CD8-positive, alpha-beta T cell (primary cell): ENCODE measurements at regions of chr9 and their contacts with region 1.

Region 1: GRCh38 chr9:85741875-85742629 is at the start of gene AGTPBP1:
- DNase-seq: peak; percentile 90 to 99 (median 97)
- ATAC-seq: peak; percentile 85
- H3K4me3 ChIP-seq: peak within 1 kb of the TSS; percentile 78 to 89
- H3K4me3 Mint-ChIP-seq: peak within 1 kb of the TSS; percentile 96
- H3K27ac ChIP-seq: peak within 1 kb of the TSS; percentile 83 to 93
- H3K27ac Mint-ChIP-seq: peak within 1 kb of the TSS; percentile 98
- H3K4me1 ChIP-seq: peaks cover 12% of the 10 kb centered on the region
- H3K4me1 Mint-ChIP-seq: peaks cover 40% of the 10 kb centered on the region
- H3K27me3 ChIP-seq: no peaks in the 10 kb centered on the region
- H3K27me3 Mint-ChIP-seq: no peaks in the 10 kb centered on the region
- CTCF ChIP-seq: no peak
- total RNA-seq, gene AGTPBP1: 58.3 to 58.4 TPM

Region 2: DNA sequence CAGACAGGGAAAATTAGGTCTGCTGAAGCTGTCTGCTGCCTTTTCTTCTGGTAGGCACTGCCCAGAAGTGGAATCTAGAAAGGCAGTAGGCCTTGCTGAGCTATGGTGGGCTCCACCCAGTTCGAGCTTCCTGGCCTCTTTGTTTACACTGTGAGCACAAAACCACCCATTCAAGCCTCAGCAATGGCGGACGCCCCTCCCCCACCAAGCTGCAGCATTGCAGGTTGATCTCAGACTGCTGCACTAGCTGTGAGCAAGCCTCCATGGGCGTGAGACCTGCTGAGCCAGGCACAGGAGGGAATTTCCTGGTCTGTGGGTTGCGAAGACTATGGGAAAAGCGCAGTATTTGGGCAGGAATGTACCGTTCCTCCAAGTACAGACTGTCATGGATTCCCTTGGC is 18.8 kb before region 1 on chr9:
- CTCF ChIA-PET with region 1: interaction called, 6 read pairs
- POLR2A ChIA-PET with region 1: interaction called, 50 read pairs
- intact Hi-C with region 1: loop called in 1 of 2 experiments (anchors 1 kb)
- DNase-seq: peak; percentile 35 to 88 (median 69)
- ATAC-seq: peak; percentile 84
- H3K4me3 ChIP-seq: peak overlapping the region; percentile 7 to 25
- H3K4me3 Mint-ChIP-seq: peak overlapping the region; percentile 65
- H3K27ac ChIP-seq: peak overlapping the region; percentile 31 to 64
- H3K27ac Mint-ChIP-seq: peak overlapping the region; percentile 91
- H3K4me1 ChIP-seq: peaks cover 27% of the 10 kb centered on the region
- H3K4me1 Mint-ChIP-seq: peaks cover 71% of the 10 kb centered on the region
- H3K27me3 ChIP-seq: no peaks in the 10 kb centered on the region
- H3K27me3 Mint-ChIP-seq: no peaks in the 10 kb centered on the region
- CTCF ChIP-seq: no peak

Region 3: DNA sequence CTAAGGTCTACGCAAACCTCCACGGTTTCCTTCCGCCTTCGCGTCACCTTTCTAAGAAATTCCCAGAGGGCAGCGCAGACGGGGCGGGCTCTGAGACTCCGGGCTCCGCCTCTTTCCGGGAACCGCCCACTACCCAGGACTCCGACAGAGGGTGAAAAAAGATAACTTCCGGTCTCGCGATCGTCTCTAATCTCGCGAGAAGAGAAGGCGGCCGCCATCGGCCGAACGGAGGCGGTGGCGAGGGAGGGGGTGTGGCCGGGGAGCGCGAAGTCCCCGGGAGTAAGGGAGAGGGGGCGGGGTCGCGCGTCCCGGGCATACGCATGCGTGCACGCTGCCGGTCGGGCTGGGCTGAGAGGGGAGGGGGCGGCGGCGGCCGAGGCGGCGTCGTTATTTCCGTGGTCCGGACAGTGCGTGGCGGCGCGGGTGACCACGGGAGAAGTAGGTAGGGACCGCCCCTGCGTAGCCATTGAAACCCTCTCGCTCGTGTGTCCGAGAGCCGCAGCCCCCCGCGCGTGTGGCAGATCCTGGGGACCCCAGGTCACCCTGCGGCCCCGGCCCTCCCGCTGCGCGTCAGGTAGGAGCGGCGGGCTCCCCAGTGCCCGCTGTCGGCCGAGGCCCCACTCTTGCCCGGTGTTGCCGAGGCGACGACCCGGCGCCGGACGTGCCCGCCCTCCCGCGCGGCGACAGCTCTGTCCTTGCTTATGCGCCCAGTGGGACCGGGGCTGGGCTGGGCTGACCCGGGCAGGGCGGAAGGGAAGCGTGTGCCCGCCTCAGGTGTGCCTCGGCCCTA is 199.0 kb after region 1 on chr9 and contains the start of gene NAA35:
- CTCF ChIA-PET with region 1: no interaction called
- POLR2A ChIA-PET with region 1: no interaction called
- intact Hi-C with region 1: loop called (anchors 1 to 2 kb)
- DNase-seq: peak; percentile 98 to 99 (median 99)
- ATAC-seq: peak; percentile 87
- H3K4me3 ChIP-seq: peak within 1 kb of the TSS; percentile 62 to 76
- H3K4me3 Mint-ChIP-seq: peak within 1 kb of the TSS; percentile 89
- H3K27ac ChIP-seq: peak within 1 kb of the TSS; percentile 78 to 83
- H3K27ac Mint-ChIP-seq: peak within 1 kb of the TSS; percentile 91
- H3K4me1 ChIP-seq: peaks cover 34% of the 10 kb centered on the region
- H3K4me1 Mint-ChIP-seq: peaks cover 12% of the 10 kb centered on the region
- H3K27me3 ChIP-seq: no peaks in the 10 kb centered on the region
- H3K27me3 Mint-ChIP-seq: no peaks in the 10 kb centered on the region
- CTCF ChIP-seq: no peak
- total RNA-seq, gene NAA35: 19.8 to 24.0 TPM